Heart left ventricle (tissue), 16 donors: ENCODE measurements at regions of chr2 and their contacts with region 1.

Region 1: DNA sequence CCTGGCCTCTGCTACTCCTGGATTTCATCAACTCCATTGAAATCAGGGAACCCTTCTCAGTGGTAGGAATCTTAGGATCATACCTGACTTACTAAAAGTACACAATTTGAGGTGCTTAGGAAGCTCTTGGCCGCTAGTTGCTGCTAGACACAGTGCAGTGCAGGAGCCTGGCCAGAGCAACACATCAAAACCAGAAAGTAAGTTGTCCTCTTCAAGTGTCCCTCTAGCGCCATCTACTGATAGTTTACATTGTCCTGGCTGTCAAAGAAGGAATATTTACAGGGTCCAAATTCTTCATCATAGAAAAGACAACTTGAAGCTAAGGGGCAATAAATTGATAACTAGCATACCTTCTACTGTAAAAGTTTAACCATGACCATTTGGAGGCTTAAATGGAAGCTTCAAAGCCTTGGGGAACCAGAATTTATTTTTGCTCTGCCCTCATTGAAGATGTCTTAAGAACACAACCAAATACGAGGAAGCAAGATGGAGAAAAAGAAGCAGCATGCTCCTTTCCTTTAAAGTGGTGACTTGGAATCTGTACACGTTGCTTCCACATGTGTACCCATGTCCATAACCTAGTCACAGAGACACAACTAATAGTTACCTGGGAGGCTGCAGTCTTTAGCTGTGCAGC is 889.1 kb upstream of the GCFC2 start:
- DNase-seq: peak in 4 of 5 donors; percentile 24 to 55 (median 37)
- ATAC-seq: peak; percentile 73 to 86 (median 78)
- H3K4me3 ChIP-seq: no peak overlapping the region
- H3K27ac ChIP-seq: no peak overlapping the region
- H3K4me1 ChIP-seq: no peaks in the 10 kb centered on the region
- H3K27me3 ChIP-seq: no peaks in the 10 kb centered on the region
- CTCF ChIP-seq: peak; percentile 55 to 76 (median 68)
- POLR2A ChIP-seq: no peak

Region 2: GRCh38 chr2:75787532-75788132 is 812.2 kb before region 1 on chr2:
- intact Hi-C with region 1: loop called in 8 of 10 experiments (anchors 2 to 10 kb)
- DNase-seq: no peak
- ATAC-seq: no peak
- H3K4me3 ChIP-seq: no peak overlapping the region
- H3K27ac ChIP-seq: no peak overlapping the region
- H3K4me1 ChIP-seq: peaks cover 0 to 5% (median 0%) of the 10 kb centered on the region in 12 donors
- H3K27me3 ChIP-seq: no peaks in the 10 kb centered on the region
- CTCF ChIP-seq: peak in 10 of 12 donors; percentile 19 to 58 (median 40)
- POLR2A ChIP-seq: no peak

Region 3: GRCh38 chr2:75799859-75800258 is 800.0 kb before region 1 on chr2:
- intact Hi-C with region 1: loop called in 1 of 10 experiments (anchors 10 kb)
- DNase-seq: no peak
- ATAC-seq: no peak
- H3K4me3 ChIP-seq: no peak overlapping the region
- H3K27ac ChIP-seq: no peak overlapping the region
- H3K4me1 ChIP-seq: no peaks in the 10 kb centered on the region
- H3K27me3 ChIP-seq: peaks cover 0 to 3% (median 0%) of the 10 kb centered on the region in 9 donors
- CTCF ChIP-seq: no peak
- POLR2A ChIP-seq: no peak

Region 4: DNA sequence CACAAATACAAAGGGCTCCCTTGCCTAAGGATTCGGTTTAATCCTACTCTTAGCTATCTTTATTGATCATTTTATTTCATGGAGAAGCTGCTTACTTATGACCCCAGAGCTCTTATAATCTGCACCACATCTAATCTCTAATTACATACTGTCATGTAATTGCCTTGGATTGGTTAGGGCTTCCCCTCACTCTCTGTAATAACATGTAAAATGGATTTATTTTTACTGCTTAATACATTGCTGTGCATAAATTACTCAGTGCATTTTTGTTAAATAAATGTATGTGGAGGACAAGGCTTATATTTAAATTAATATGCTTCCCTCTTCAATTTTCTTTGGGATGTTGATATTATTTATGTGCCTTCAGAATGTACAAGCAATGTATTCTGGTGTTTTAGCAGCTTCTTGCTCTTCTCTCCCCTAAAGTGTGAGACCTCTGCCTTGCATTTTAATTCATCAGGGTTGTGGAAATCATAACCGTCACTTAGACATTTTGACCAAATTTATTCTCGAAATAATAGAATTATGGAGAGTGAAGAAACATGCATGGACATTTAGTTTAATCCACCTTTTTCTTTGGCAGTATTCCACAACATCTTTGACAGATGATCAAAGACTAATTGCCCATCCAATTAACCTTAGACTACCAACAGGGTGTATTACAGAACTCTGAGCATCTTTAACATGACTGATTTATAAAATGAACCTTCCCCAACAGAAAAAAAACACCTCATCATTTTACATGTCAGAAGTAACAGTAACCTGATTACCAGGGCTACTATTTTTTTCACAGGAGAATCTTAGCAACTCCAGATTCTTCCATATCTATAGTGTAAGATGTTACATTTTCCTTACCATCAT is 229.8 kb after region 1 on chr2:
- intact Hi-C with region 1: no loop called
- DNase-seq: no peak
- ATAC-seq: no peak
- H3K4me3 ChIP-seq: no peak overlapping the region
- H3K27ac ChIP-seq: no peak overlapping the region
- H3K4me1 ChIP-seq: no peaks in the 10 kb centered on the region
- H3K27me3 ChIP-seq: no peaks in the 10 kb centered on the region
- CTCF ChIP-seq: no peak
- POLR2A ChIP-seq: no peak

Region 5: GRCh38 chr2:77328125-77328524 is 728.3 kb after region 1 on chr2:
- intact Hi-C with region 1: no loop called
- DNase-seq: no peak
- ATAC-seq: no peak
- H3K4me3 ChIP-seq: no peak overlapping the region
- H3K27ac ChIP-seq: no peak overlapping the region
- H3K4me1 ChIP-seq: no peaks in the 10 kb centered on the region
- H3K27me3 ChIP-seq: no peaks in the 10 kb centered on the region
- CTCF ChIP-seq: no peak
- POLR2A ChIP-seq: no peak